ENCODE measurements at regions of chr14 and their contacts with region 1.

Region 1: GRCh38 chr14:20317720-20318119 is 12.0 kb upstream of the TTC5 start:
- DNase-seq: no peak
- ATAC-seq: no peak
- H3K4me3 ChIP-seq: no peak overlapping the region
- H3K27ac ChIP-seq: no peak overlapping the region
- H3K4me1 ChIP-seq: no peaks in the 10 kb centered on the region
- H3K27me3 ChIP-seq: no peaks in the 10 kb centered on the region
- CTCF ChIP-seq: no peak
- POLR2A ChIP-seq: no peak
- RAD21 ChIP-seq: no peak

Region 2: DNA sequence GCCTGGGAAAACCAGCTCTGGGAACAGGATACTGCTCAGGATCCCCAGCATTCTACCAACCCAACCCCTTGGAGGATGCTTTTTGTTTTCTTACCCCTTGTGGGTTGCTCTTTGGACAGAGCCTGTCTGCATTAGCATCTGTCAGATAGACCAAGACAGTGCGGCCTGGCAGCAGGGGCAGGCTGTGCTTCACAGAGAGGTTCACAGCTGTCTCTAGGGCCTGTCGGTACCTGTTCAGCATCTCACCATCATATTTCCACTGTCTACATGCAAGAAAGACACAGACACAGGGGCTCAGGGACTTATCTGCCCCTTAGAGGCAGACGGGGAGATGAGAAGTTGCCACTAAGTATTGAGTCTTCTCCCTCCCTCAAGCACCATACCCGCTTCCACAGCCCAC is 73.8 kb after region 1 on chr14:
- CTCF ChIA-PET with region 1: no interaction called
- POLR2A ChIA-PET with region 1: no interaction called
- dilution Hi-C with region 1: no loop called
- in situ Hi-C with region 1: no loop called
- intact Hi-C with region 1: loop called (anchors 10 kb)
- DNase-seq: no peak
- ATAC-seq: no peak
- H3K4me3 ChIP-seq: no peak overlapping the region
- H3K27ac ChIP-seq: no peak overlapping the region
- H3K4me1 ChIP-seq: no peaks in the 10 kb centered on the region
- H3K27me3 ChIP-seq: no peaks in the 10 kb centered on the region
- CTCF ChIP-seq: no peak
- POLR2A ChIP-seq: no peak
- RAD21 ChIP-seq: no peak

Region 3: GRCh38 chr14:20587489-20588154 is 269.9 kb after region 1 on chr14 and contains the start of gene RNASE11:
- CTCF ChIA-PET with region 1: no interaction called
- POLR2A ChIA-PET with region 1: no interaction called
- dilution Hi-C with region 1: no loop called
- in situ Hi-C with region 1: no loop called
- intact Hi-C with region 1: no loop called
- DNase-seq: no peak
- ATAC-seq: no peak
- H3K4me3 ChIP-seq: no peak within 1 kb of the TSS
- H3K27ac ChIP-seq: no peak within 1 kb of the TSS
- H3K4me1 ChIP-seq: no peaks in the 10 kb centered on the region
- H3K27me3 ChIP-seq: peaks cover 5% of the 10 kb centered on the region
- CTCF ChIP-seq: no peak
- POLR2A ChIP-seq: no peak
- RAD21 ChIP-seq: no peak
- total RNA-seq, gene RNASE11: not detected in 2 replicates

Measured in IMR-90 (cell line).